AG04449 (cell line): ENCODE measurements at regions of chr11 and their contacts with region 1.

Region 1: GRCh38 chr11:119432484-119433357 is 9.7 kb upstream of the THY1 start:
- DNase-seq: no peak
- H3K4me3 ChIP-seq: peak overlapping the region; percentile 48
- CTCF ChIP-seq: no peak

Region 2: GRCh38 chr11:119339589-119340343 is 93.0 kb before region 1 on chr11:
- CTCF ChIA-PET with region 1: interaction called, 17 read pairs
- POLR2A ChIA-PET with region 1: interaction called, 3 read pairs
- DNase-seq: no peak
- H3K4me3 ChIP-seq: peak overlapping the region; percentile 59
- CTCF ChIP-seq: peak; percentile 91

Region 3: GRCh38 chr11:119421941-119422808 is 10.5 kb before region 1 on chr11:
- CTCF ChIA-PET with region 1: interaction called, 4 read pairs
- POLR2A ChIA-PET with region 1: interaction called, 38 read pairs
- DNase-seq: no peak
- H3K4me3 ChIP-seq: peak overlapping the region; percentile 91
- CTCF ChIP-seq: no peak

Region 4: DNA sequence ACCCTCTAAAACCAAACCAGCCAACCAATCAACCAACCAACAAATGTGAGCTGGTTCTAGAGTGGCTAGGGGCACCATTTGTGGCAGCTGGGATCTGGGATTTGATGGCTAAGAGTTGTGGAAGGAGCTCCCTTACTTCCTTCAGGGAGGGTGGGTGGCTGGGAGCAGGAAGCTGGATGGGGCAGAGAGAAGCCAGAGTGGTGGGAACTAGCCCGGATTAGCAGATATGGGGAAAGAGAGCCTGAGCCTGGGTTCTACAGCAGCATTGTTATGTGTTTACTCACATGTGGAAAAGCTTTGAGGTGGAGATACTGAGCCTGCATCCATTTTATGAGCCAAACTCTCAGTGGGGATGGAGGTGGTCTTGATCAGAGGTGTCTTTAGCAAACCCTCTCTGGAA is 21.2 kb after region 1 on chr11:
- CTCF ChIA-PET with region 1: no interaction called
- POLR2A ChIA-PET with region 1: no interaction called
- DNase-seq: no peak
- H3K4me3 ChIP-seq: no peak overlapping the region
- CTCF ChIP-seq: no peak

Region 5: GRCh38 chr11:119567688-119568582 is 135.2 kb after region 1 on chr11:
- CTCF ChIA-PET with region 1: no interaction called
- POLR2A ChIA-PET with region 1: no interaction called
- DNase-seq: peak; percentile 26
- H3K4me3 ChIP-seq: no peak overlapping the region
- CTCF ChIP-seq: no peak